MCF 10A (cell line): ENCODE measurements at regions of chr21 and their contacts with region 1.

Region 1: DNA sequence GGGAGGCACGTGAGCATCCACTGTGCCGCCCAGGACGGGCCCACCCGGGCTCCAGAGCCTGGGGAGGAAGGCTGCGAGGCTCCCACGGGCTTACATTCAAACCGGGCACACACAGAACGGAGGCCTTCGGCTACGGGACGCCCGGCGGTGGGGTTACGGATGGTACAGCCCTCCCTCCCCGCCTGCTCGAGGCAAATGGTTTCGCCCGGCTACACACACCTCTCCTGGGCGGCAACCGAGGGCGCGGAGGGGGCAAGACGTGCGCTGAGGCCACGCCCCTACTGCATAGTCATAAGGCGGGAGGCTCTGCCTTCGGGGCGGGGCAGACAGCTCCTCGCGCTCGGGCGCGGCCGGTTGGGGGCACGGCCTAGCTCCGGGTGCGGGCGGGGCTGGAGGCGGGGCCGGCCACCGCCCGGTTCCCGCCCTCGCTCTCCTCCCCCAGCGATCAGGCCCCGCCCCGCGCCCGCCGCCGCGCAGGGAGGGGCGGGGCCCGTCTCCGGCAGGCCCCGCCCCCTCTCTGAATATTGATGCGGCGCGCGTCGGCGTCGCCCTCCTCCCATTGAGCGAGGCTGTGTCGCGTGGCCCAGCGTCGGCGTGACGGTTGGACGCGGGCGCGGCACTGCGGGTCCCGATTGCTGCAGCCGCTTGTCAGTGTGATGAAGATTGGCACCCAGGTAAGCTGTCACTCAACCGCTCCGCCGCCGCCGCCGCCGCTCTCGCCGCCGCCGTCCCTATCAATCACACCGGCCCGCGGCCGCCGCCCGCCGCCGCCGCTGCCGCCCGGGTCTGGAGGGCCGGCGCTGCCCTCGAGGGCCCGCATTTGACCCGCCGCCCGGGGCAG is at the start of gene PKNOX1:
- DNase-seq: peak; percentile 99
- H3K4me3 Mint-ChIP-seq: peak within 1 kb of the TSS; percentile 81
- H3K27ac Mint-ChIP-seq: peak within 1 kb of the TSS; percentile 90
- H3K4me1 Mint-ChIP-seq: peaks cover 7% of the 10 kb centered on the region
- H3K27me3 Mint-ChIP-seq: no peaks in the 10 kb centered on the region
- CTCF ChIP-seq: no peak
- total RNA-seq, gene PKNOX1: 13.4 and 15.0 TPM in 2 replicates

Region 2: DNA sequence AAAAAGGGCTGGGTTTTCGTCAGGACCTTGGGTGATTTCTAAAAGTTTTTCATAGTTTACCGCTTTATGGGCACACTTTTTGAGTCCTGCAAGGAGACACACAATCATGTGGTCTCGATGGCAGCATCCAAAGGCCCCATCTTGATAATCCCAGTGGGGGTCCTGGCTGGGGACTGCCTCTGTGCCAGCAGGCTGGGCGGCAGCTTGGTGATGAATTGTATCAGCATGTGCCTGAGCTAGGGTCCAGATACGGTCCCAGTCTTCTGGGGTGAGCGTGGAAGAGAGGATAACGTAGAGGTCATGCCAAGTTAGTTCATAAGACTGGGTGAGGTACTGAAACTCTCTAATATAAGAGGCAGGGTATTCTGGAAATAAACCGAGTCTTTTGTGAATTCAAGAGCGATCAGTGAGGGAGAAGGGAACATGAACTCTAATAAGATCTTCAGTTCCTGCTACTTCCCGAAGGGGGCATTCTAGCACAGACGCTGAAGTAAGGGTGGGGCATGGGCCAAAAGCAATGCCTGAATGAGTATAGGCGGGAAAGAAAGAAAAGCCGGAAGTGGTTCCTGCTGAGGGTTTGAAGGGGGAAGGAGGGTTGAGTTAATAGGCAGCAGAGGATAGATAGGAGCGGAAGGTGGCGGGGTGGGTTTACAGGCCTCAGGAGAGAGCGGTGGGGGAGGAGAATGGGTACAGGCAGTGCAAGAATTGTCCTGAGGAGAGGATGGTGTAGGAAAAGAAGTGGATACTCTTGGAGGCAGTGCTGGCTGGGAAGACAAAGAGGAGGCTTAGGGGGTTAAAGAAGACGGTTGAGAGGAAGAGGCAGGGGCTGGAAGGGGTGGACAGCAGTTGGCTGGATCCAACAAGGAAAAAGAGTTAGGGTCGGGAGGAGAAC is 50.4 kb before region 1 on chr21:
- CTCF ChIA-PET with region 1: no interaction called
- POLR2A ChIA-PET with region 1: interaction called, 3 read pairs
- intact Hi-C with region 1: loop called (anchors 2 kb)
- DNase-seq: peak; percentile 91
- H3K4me3 Mint-ChIP-seq: no peak overlapping the region
- H3K27ac Mint-ChIP-seq: peak overlapping the region; percentile 86
- H3K4me1 Mint-ChIP-seq: peaks cover 11% of the 10 kb centered on the region
- H3K27me3 Mint-ChIP-seq: no peaks in the 10 kb centered on the region
- CTCF ChIP-seq: peak; percentile 58

Region 3: GRCh38 chr21:42939582-42940410 is 34.4 kb before region 1 on chr21:
- CTCF ChIA-PET with region 1: no interaction called
- POLR2A ChIA-PET with region 1: interaction called, 6 read pairs
- intact Hi-C with region 1: loop called (anchors 1 kb)
- DNase-seq: peak; percentile 99
- H3K4me3 Mint-ChIP-seq: peak overlapping the region; percentile 11
- H3K27ac Mint-ChIP-seq: peak overlapping the region; percentile 10
- H3K4me1 Mint-ChIP-seq: peaks cover 24% of the 10 kb centered on the region
- H3K27me3 Mint-ChIP-seq: no peaks in the 10 kb centered on the region
- CTCF ChIP-seq: no peak

Region 4: GRCh38 chr21:42956819-42957632 is 17.2 kb before region 1 on chr21:
- CTCF ChIA-PET with region 1: no interaction called
- POLR2A ChIA-PET with region 1: interaction called, 19 read pairs
- intact Hi-C with region 1: loop called (anchors 2 kb)
- DNase-seq: no peak
- H3K4me3 Mint-ChIP-seq: no peak overlapping the region
- H3K27ac Mint-ChIP-seq: no peak overlapping the region
- H3K4me1 Mint-ChIP-seq: peaks cover 5% of the 10 kb centered on the region
- H3K27me3 Mint-ChIP-seq: no peaks in the 10 kb centered on the region
- CTCF ChIP-seq: no peak